ENCODE measurements at regions of chr1 and their contacts with region 1.

Region 1: GRCh38 chr1:23545851-23546250 is 13.4 kb downstream of the ID3 start:
- DNase-seq: no peak
- ATAC-seq: no peak
- H3K4me3 ChIP-seq: no peak overlapping the region
- H3K27ac ChIP-seq: no peak overlapping the region
- H3K4me1 ChIP-seq: no peaks in the 10 kb centered on the region
- H3K27me3 ChIP-seq: no peaks in the 10 kb centered on the region
- CTCF ChIP-seq: no peak
- POLR2A ChIP-seq: no peak
- RAD21 ChIP-seq: no peak

Region 2: DNA sequence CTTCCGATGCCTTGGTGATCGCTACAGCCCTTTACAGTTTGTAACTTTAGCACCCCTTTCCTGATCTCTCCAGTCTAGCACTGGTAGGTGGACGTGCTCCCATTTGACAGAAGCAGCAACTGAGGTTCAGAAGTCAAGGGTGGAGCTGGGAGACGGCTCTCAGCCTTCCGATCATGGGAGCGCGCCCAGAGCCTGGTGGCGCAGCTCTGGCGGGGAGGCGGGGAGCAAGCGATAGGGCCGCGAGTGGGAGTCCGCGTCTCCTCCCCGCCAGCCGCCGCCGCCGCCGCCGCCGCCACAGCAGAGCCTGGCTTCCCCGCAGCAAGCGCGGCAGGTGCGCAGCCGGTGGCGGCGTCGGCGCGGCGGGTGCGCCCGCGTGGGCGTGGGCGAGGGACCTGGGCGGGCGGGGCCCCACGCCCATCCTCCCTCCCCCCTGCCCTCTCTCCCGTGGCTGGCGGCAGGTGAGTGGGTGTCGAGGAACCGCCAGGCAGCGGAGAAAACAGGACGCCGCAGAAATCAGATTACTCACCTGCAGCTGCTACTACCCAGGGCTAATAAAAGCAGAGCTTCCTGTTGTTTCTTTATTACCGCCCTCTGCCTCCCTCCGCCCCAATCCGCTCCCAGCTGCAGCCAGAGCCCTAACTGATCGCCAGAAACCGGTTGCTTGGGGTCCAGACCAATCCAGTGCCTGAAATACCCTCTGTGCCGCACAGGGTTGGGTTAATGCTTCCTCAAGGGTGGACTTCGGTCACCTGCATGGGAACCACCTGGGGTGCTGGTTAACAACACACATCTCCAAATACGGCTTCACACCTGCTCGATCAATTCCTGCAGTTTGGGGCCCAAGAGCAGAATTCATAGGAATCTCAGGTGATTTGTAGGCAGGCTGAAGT is 73.7 kb after region 1 on chr1:
- CTCF ChIA-PET with region 1: no interaction called
- POLR2A ChIA-PET with region 1: interaction called, 11 read pairs
- dilution Hi-C with region 1: no loop called
- in situ Hi-C with region 1: no loop called
- intact Hi-C with region 1: no loop called
- DNase-seq: peak; percentile 13
- ATAC-seq: peak; percentile 66
- H3K4me3 ChIP-seq: peak overlapping the region; percentile 34
- H3K27ac ChIP-seq: no peak overlapping the region
- H3K4me1 ChIP-seq: no peaks in the 10 kb centered on the region
- H3K27me3 ChIP-seq: peaks cover 35% of the 10 kb centered on the region
- CTCF ChIP-seq: no peak
- POLR2A ChIP-seq: no peak
- RAD21 ChIP-seq: no peak

Region 3: DNA sequence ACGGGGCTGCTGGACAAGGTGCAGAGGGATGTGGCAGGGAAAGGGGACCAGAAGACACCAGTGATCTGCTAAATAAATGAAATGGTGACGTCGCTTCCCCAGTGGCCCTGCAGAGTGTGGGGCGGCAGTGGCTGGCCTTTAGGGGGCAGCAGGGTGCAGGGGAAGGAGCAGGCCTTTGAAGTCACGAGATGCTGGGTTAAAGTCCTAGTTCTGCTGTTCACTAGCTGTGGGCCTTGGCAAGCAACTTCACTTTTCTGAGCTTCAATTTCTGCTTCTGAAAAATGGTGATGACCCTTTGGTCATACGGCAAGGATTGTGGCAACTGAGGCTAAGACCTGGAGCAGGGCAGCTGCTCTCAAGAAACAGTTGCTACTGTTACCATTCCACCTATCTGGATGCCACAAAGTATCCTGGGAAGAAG is 263.9 kb after region 1 on chr1:
- CTCF ChIA-PET with region 1: no interaction called
- POLR2A ChIA-PET with region 1: no interaction called
- dilution Hi-C with region 1: no loop called
- in situ Hi-C with region 1: no loop called
- intact Hi-C with region 1: no loop called
- DNase-seq: peak; percentile 51
- ATAC-seq: peak; percentile 91
- H3K4me3 ChIP-seq: no peak overlapping the region
- H3K27ac ChIP-seq: no peak overlapping the region
- H3K4me1 ChIP-seq: no peaks in the 10 kb centered on the region
- H3K27me3 ChIP-seq: no peaks in the 10 kb centered on the region
- CTCF ChIP-seq: peak; percentile 75
- POLR2A ChIP-seq: no peak
- RAD21 ChIP-seq: peak; percentile 74